AG04449 (cell line): ENCODE measurements at regions of chr20 and their contacts with region 1.

Region 1: DNA sequence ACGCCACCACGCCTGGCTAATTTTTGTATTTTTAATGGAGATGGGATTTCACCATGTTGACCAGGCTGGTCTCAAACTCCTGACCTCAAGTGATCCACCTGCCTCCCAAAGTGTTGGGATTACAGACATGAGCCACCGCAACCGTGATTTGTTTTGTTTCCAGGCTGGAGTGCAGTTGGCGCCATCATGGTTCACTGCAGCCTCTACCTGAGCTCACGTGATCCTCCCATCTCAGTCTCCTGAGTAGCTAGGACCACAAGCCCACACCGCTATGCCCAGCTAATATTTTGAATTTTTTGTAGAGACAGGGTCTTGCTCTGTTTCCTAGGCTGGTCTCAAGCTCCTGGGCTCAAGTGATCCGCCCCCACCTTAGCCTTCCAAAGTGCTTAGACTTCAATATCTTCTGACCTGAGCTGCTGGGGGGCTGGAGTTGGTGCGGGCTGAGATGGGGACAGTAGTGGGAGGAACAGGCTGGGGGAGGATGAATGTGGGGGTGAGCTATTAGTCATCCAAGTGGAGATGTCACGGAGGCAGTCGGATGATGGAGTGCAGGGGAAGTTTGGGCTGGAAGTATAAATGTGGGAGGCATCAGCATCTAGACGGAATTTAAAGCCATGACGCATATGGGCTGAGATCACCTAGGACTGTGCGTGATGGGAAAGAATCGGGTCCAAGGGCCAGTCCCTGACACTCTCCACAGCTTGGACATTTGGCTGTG is 23.1 kb upstream of the ZMYND8 start:
- DNase-seq: peak; percentile 58
- H3K4me3 ChIP-seq: no peak overlapping the region
- CTCF ChIP-seq: no peak

Region 2: DNA sequence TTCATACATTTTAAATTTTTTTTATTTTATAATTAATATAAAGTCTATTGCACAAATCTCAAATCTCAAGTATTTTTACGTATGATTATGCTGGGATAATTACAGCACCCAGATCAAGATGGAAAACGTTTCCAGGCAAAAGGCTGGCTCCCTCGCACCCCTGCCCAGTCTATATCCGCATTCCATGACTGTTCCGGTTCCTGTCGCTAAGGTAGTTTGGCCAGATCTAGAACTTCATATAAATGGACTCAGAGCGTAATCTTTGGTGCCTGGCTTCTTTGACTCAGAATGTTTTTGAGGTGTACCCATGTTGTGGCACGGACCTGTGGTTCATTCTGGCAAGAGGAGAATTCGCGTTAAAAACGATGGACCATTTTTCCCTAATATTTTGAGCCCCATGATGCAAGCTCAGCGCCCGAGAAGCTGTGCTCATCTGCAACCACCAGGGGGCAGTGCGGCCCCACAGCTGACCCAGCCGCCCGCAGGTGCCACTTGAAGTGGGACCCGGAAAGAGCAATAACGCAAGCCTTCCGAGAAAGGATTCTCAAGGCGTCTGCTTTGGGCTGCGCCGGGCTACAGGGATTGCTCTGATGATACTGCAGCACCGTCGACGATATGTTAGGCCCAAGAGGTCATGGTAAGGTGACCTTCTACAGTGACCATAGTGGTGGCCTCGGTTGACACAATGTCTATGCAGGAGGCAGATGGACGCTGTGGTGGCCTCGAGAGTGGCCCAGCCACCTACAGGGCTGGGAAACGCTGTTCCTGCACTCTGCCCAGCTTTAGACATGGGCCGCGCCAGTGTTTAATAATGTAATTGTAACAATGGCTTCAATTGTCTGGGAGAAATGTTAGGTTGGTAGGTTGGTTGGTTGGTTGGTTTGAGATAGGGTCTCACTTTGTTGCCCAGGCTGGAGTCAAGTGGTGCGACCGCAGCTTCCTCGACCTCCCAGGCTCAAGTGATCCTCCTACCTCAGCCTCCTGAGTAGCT is 183.2 kb before region 1 on chr20:
- CTCF ChIA-PET with region 1: interaction called, 138 read pairs
- POLR2A ChIA-PET with region 1: no interaction called
- DNase-seq: no peak
- H3K4me3 ChIP-seq: no peak overlapping the region
- CTCF ChIP-seq: peak; percentile 88

Region 3: DNA sequence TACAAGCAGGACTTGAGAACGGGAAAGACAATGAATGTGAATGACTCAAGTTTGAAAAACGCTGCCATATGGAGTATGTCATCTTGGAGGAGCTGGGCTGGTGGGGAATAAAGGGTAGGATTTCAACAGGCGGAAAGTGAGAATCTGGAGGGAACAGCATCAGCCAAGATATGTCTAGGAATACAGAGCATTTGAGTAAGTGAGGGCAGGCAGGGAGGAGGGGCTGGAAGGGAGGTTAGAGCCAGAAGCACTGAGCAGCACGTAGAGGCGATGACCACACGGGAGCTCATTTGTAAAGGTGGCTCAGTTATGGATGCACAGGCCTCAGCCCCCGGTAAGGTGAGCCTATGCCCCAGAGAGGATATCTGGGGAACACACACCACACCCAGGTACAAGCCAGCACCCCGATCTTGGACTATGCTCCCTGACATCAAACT is 138.2 kb before region 1 on chr20:
- CTCF ChIA-PET with region 1: interaction called, 39 read pairs
- POLR2A ChIA-PET with region 1: no interaction called
- DNase-seq: no peak
- H3K4me3 ChIP-seq: no peak overlapping the region
- CTCF ChIP-seq: no peak

Region 4: GRCh38 chr20:47281376-47281775 is 98.2 kb before region 1 on chr20:
- CTCF ChIA-PET with region 1: interaction called, 633 read pairs
- POLR2A ChIA-PET with region 1: interaction called, 3 read pairs
- DNase-seq: no peak
- H3K4me3 ChIP-seq: no peak overlapping the region
- CTCF ChIP-seq: no peak

Region 5: DNA sequence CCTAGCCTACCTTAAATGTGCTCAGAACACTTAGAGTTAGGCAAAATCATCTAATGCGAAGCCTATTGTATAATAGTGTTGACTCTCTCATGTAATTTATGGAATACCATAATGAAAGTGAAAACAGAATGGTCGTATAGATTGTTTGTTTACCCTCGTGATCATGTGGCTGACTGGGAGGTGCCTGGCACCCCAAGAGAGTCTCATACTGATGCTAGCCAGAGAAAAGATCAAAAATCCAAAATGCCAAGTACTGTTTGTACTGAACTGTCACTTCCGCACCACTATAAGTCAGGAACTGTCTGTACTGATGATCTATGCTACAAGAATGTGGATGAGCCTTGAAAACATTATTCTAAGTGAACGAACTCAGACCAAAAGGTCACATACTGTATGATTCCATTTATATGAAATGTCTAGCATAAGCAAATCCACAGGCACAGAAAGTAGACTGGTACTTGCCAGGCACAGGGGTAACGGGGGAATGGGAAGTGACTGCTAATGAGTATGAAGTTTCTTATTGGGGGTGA is 45.5 kb before region 1 on chr20:
- CTCF ChIA-PET with region 1: interaction called, 18 read pairs
- POLR2A ChIA-PET with region 1: interaction called, 5 read pairs
- DNase-seq: peak; percentile 88
- H3K4me3 ChIP-seq: peak overlapping the region; percentile 39
- CTCF ChIP-seq: no peak

Region 6: DNA sequence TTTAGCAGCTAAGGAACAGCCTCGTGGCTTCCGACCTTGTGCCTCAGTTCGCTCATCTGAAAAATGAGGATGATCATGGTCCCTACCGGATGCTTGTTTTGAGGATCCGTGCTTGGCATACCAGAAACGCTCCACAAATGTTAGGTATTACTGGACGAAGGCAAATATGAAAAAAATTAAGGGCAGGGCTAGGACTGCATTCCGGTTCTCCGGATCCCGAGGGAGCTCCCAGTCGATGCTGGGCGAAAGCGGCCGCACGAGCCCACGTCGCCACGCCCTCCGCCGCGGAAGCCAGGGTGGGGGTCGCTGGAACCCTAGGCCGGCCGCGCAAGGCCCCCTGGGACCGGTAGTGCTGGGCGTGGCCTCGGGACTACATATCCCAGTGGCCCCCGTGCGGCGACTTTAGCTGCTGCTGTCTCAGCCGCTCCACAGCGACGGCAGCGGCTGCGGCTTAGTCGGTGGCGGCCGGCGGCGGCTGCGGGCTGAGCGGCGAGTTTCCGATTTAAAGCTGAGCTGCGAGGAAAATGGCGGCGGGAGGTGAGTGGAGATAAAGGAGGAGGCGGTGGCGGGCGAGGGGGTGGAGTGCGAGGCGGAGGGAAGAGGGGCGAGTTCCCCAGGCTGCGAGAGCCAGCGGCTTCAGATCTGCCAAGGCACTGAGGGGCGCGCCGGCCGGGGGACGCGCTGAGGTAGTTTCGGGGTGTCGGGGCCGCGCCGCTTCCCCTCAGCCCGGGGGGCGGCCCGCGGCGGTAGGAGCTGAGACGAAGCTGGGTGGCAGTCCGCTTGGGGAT is 122.1 kb after region 1 on chr20 and contains the start of gene NCOA3:
- CTCF ChIA-PET with region 1: interaction called, 14 read pairs
- POLR2A ChIA-PET with region 1: interaction called, 8 read pairs
- DNase-seq: peak; percentile 64
- H3K4me3 ChIP-seq: peak within 1 kb of the TSS; percentile 82
- CTCF ChIP-seq: peak; percentile 68